Endothelial cell of umbilical vein (primary cell): ENCODE measurements at regions of chr6 and their contacts with region 1.

Region 1: DNA sequence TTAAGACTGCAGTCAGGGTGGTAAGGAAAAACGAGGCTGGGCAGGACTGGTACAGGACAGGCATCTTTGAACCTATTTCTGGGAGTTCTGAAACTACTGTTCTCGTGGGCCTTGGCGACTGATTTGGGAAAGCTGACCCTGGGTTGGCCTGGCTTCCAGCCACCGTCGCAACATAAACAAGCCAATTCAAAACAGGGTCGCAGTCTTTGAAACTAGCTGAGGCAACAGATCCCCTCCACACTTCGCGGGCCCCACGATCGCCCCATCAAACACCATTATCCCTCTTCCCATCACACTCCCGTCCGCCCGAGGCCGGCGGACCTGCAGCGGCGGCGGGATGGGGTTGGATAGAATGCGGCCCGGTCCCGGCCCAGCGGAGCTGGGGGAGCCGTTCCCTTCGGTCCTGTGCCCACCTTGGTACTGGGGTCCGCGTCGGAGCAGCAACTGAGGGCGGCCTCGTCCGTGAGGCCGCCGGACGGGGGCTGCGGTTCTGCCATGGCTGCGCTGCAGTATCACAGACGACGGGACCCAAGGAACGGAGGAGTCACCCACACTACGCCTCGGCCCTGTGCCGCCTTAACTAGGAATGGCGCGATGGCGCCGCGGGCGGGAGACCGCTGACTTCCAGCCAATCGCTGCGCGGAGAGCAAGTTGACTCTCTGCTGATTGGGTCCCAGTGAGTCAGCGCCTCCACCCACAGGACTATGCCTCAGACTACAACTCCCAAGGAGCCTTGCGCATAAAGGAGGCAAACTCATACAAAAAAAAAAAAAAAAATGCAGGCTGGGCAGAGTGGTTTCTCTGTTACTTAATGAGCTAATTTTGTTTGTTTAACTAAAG is at the start of gene GLO1:
- DNase-seq: peak; percentile 99
- H3K4me3 ChIP-seq: peak within 1 kb of the TSS; percentile 48 to 80 (median 72)
- H3K27ac ChIP-seq: peak within 1 kb of the TSS; percentile 65
- H3K4me1 ChIP-seq: no peaks in the 10 kb centered on the region
- H3K27me3 ChIP-seq: no peaks in the 10 kb centered on the region
- CTCF ChIP-seq: no peak
- POLR2A ChIP-seq: peak; percentile 74
- total RNA-seq, gene GLO1: 120 and 135 TPM in 2 replicates

Region 2: GRCh38 chr6:38639498-38640215 is 63.1 kb before region 1 on chr6 and contains the start of gene BTBD9:
- CTCF ChIA-PET with region 1: no interaction called
- POLR2A ChIA-PET with region 1: no interaction called
- dilution Hi-C with region 1: no loop called
- intact Hi-C with region 1: loop called (anchors 1 kb)
- DNase-seq: peak; percentile 88
- H3K4me3 ChIP-seq: peak within 1 kb of the TSS; percentile 34 to 69 (median 66)
- H3K27ac ChIP-seq: peak within 1 kb of the TSS; percentile 91
- H3K4me1 ChIP-seq: peaks cover 16% of the 10 kb centered on the region
- H3K27me3 ChIP-seq: no peaks in the 10 kb centered on the region
- CTCF ChIP-seq: no peak
- POLR2A ChIP-seq: peak; percentile 53
- total RNA-seq, gene BTBD9: 15.0 and 16.0 TPM in 2 replicates